WTC11 (cell line): ENCODE measurements at regions of chr18 and their contacts with region 1.

Region 1: GRCh38 chr18:21191596-21192307 is 50.3 kb upstream of the GREB1L start:
- DNase-seq: peak; percentile 71
- ATAC-seq: peak; percentile 91
- H3K4me3 Mint-ChIP-seq: no peak overlapping the region
- H3K27ac Mint-ChIP-seq: no peak overlapping the region
- H3K4me1 Mint-ChIP-seq: no peaks in the 10 kb centered on the region
- H3K27me3 Mint-ChIP-seq: peaks cover 3% of the 10 kb centered on the region
- CTCF ChIP-seq: no peak

Region 2: GRCh38 chr18:21179590-21180220 is 12.0 kb before region 1 on chr18:
- CTCF ChIA-PET with region 1: interaction called, 30 read pairs
- POLR2A ChIA-PET with region 1: no interaction called
- DNase-seq: peak; percentile 59
- ATAC-seq: peak; percentile 77
- H3K4me3 Mint-ChIP-seq: no peak overlapping the region
- H3K27ac Mint-ChIP-seq: no peak overlapping the region
- H3K4me1 Mint-ChIP-seq: no peaks in the 10 kb centered on the region
- H3K27me3 Mint-ChIP-seq: no peaks in the 10 kb centered on the region; the same call in 1 of the 2 replicates
- CTCF ChIP-seq: peak; percentile 62

Region 3: DNA sequence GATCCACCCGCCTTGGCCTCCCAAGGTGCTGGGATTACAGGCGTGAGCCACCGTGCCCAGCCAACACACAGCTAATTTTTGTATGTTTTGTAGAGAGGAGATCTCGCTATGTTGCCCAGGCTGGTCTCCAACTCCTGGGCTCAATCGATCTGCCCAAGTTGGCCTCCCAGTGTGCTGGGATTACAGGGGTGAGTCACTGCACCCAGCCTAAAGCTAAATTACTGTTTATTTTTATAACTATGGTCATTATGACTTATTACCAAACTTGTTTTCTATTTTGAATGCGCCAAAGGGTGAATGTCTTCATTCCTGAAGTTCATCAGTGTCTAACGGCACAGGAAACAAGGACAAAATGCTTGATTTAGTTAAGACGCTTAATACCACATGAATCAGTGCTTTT is 11.3 kb after region 1 on chr18:
- CTCF ChIA-PET with region 1: interaction called, 10 read pairs
- POLR2A ChIA-PET with region 1: no interaction called
- DNase-seq: no peak
- ATAC-seq: no peak
- H3K4me3 Mint-ChIP-seq: no peak overlapping the region
- H3K27ac Mint-ChIP-seq: no peak overlapping the region
- H3K4me1 Mint-ChIP-seq: no peaks in the 10 kb centered on the region
- H3K27me3 Mint-ChIP-seq: peaks cover 3% of the 10 kb centered on the region
- CTCF ChIP-seq: no peak

Region 4: GRCh38 chr18:21444465-21445023 is 252.8 kb after region 1 on chr18:
- CTCF ChIA-PET with region 1: interaction called, 18 read pairs
- POLR2A ChIA-PET with region 1: no interaction called
- DNase-seq: peak; percentile 47
- ATAC-seq: peak; percentile 84
- H3K4me3 Mint-ChIP-seq: no peak overlapping the region
- H3K27ac Mint-ChIP-seq: no peak overlapping the region
- H3K4me1 Mint-ChIP-seq: peaks cover 7% of the 10 kb centered on the region; the same call in 1 of the 2 replicates
- H3K27me3 Mint-ChIP-seq: peaks cover 11% of the 10 kb centered on the region
- CTCF ChIP-seq: peak; percentile 45; the same call in 1 of the 2 replicates